PC-9 (cell line): ENCODE measurements at regions of chr16 and their contacts with region 1.

Region 1: DNA sequence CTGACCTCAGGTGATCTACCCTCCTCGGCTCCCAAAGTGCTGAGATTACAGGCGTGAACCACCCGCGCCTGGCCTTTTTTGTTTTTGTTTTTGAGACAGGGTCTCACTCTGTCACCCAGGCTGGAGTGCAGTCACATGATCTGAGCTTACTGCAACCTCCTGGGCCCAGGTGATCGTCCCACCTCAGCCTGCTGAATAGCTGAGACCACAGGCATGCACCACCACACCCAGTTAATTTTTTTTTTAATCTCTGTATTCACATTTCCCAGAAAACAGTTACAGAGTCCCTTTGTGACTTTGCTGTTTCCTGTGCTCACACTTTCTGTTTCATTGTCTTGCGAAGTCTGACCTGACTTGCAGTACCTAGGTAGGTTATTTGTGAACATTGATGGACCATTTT is 2.7 kb downstream of the CLUAP1 start:
- DNase-seq: peak; percentile 54 to 82
- H3K4me3 ChIP-seq: no peak overlapping the region
- H3K27ac ChIP-seq: peak overlapping the region; percentile 22; the same call in 1 of the 2 replicates
- H3K4me1 ChIP-seq: peaks cover 20% of the 10 kb centered on the region
- H3K27me3 ChIP-seq: no peaks in the 10 kb centered on the region
- CTCF ChIP-seq: no peak

Region 2: GRCh38 chr16:3150346-3151218 is 352.9 kb before region 1 on chr16:
- CTCF ChIA-PET with region 1: no interaction called
- POLR2A ChIA-PET with region 1: no interaction called
- intact Hi-C with region 1: loop called (anchors 1 kb)
- DNase-seq: peak; percentile 91 to 99
- H3K4me3 ChIP-seq: peak overlapping the region; percentile 99
- H3K27ac ChIP-seq: peak overlapping the region; percentile 75
- H3K4me1 ChIP-seq: peaks cover 6% of the 10 kb centered on the region
- H3K27me3 ChIP-seq: no peaks in the 10 kb centered on the region
- CTCF ChIP-seq: no peak

Region 3: DNA sequence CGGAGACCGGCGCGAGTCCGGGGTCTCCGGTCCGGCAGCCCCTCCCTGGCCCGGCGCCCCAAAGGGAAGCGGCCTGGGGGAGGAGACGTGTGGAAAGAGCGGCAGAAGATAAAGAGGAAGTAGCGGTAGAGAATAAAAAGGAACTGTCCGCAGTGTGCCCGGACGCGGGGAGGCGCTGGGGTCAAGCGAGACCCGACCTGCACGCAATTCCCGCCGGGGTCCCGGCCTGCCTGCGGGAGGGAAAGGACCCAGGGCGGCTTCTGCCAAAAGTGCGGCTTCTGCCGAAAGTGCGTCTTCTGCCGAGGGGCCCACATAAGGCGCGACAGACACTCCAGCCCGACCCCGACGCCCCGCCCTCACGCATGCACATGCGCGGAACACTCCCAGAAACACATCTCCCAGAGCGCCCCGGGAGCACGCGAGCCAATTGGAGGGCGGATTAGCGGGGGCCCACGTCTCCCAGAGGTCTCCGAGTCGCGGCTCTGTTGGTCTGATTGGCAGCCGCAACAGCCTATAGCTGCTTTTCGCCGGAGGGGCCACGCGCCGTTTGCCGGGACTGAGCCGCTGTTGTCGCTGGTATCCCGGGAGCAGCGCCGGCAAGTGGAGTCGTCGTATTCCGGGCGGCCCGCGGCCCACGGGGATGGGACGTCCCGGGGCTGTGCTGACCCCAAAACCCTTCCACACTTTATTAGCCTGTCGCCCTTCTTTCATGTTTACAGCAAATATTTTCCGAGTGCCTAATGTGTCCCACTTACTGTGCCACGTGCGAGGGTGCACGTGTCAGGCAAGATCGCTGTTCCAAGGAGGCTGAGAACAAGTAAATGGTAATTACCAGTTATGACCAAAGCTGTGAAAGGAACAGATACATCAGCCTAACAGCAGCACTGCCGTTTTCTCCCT is 239.1 kb before region 1 on chr16:
- CTCF ChIA-PET with region 1: no interaction called
- POLR2A ChIA-PET with region 1: no interaction called
- intact Hi-C with region 1: loop called (anchors 5 kb)
- DNase-seq: peak; percentile 95 to 99
- H3K4me3 ChIP-seq: peak overlapping the region; percentile 84
- H3K27ac ChIP-seq: peak overlapping the region; percentile 75
- H3K4me1 ChIP-seq: no peaks in the 10 kb centered on the region; the same call in 1 of the 2 replicates
- H3K27me3 ChIP-seq: no peaks in the 10 kb centered on the region
- CTCF ChIP-seq: no peak

Region 4: GRCh38 chr16:3400779-3401688 is 102.5 kb before region 1 on chr16 and contains the starts of genes ZNF174 and ZSCAN32:
- CTCF ChIA-PET with region 1: no interaction called
- POLR2A ChIA-PET with region 1: no interaction called
- intact Hi-C with region 1: loop called (anchors 5 kb)
- DNase-seq: peak; percentile 98 to 100
- H3K4me3 ChIP-seq: peak within 1 kb of the TSS; percentile 74
- H3K27ac ChIP-seq: peak within 1 kb of the TSS; percentile 40; the same call in 1 of the 2 replicates
- H3K4me1 ChIP-seq: peaks cover 12% of the 10 kb centered on the region; the same call in 1 of the 2 replicates
- H3K27me3 ChIP-seq: no peaks in the 10 kb centered on the region
- CTCF ChIP-seq: no peak
- total RNA-seq, gene ZNF174: 12.1 and 13.2 TPM in 2 replicates
- total RNA-seq, gene ZSCAN32: 15.5 and 16.4 TPM in 2 replicates

Region 5: GRCh38 chr16:3490911-3491629 is 12.5 kb before region 1 on chr16:
- CTCF ChIA-PET with region 1: interaction called, 10 read pairs
- POLR2A ChIA-PET with region 1: no interaction called
- intact Hi-C with region 1: no loop called
- DNase-seq: no peak
- H3K4me3 ChIP-seq: no peak overlapping the region
- H3K27ac ChIP-seq: no peak overlapping the region
- H3K4me1 ChIP-seq: peaks cover 13% of the 10 kb centered on the region
- H3K27me3 ChIP-seq: no peaks in the 10 kb centered on the region
- CTCF ChIP-seq: no peak

Region 6: DNA sequence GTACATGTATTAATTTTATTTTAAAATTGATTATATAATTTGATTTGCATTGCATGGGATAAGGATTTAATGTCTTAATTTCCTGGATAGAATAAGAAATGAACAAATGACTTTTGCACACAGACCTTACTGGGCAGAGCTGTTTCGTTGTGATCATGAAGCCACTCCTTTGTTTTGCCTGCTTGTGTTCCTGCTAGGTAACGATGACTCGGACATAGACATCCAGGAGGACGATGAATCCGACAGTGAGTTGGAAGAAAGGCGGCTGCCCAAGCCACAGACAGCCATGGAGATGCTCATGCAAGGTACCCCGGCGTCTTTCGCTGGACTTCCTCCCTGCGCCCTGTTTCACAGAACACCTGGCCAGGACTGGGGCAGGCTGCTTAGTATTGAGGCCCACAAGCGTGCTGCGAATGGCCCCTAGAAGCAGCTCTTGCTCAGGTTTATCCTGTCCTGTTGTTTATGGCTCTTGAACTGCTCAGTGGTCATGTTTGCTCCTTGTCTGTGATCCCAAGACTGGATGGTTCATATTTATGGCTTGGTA is 26.9 kb after region 1 on chr16:
- CTCF ChIA-PET with region 1: no interaction called
- POLR2A ChIA-PET with region 1: no interaction called
- intact Hi-C with region 1: no loop called
- DNase-seq: peak in 1 of 2 experiments; percentile 28
- H3K4me3 ChIP-seq: no peak overlapping the region
- H3K27ac ChIP-seq: peak overlapping the region; percentile 32; the same call in 1 of the 2 replicates
- H3K4me1 ChIP-seq: no peaks in the 10 kb centered on the region; the same call in 1 of the 2 replicates
- H3K27me3 ChIP-seq: no peaks in the 10 kb centered on the region
- CTCF ChIP-seq: no peak

Region 7: DNA sequence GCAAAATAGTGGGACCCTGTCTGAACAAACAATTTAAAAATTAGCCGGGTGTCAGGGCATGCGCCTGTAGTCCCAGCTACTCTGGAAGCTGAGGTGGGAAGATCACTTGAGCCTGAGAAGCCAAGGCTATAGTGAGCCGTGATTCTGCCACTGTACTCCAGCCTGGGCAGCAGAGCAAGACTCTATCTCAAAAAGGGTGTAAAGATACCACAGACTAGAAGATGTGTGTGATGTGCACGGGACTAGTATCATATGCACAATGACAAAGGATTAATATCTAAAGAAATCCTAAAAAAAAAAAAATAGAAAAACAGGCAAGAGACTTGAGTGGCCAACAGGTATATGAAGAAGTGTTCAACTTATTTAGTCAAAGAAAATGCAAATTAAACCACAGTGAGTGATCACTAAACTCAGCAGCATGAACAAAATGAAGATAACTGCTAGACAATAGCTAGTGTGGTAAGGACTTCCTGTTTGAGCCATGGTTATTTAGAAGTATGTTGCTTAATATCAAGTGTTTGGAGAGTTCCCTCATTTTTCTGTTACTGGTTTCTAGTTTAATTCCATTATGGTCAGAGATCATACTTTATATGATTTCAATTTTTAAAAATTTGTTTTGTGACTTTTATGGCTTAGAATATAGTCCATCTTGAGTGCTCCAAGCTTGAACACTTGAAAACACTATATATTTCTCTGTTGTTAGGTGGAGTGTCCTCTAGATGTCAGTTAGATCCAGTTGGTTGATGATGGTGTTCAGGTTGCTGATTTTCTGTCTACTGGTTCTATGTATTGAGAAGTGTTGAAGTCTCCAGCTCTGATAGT is 122.6 kb after region 1 on chr16:
- CTCF ChIA-PET with region 1: no interaction called
- POLR2A ChIA-PET with region 1: no interaction called
- intact Hi-C with region 1: no loop called
- DNase-seq: no peak
- H3K4me3 ChIP-seq: no peak overlapping the region
- H3K27ac ChIP-seq: no peak overlapping the region
- H3K4me1 ChIP-seq: no peaks in the 10 kb centered on the region
- H3K27me3 ChIP-seq: no peaks in the 10 kb centered on the region
- CTCF ChIP-seq: no peak